Esophagus muscularis mucosa (tissue), 4 donors: ENCODE measurements at regions of chr2 and their contacts with region 1.

Region 1: DNA sequence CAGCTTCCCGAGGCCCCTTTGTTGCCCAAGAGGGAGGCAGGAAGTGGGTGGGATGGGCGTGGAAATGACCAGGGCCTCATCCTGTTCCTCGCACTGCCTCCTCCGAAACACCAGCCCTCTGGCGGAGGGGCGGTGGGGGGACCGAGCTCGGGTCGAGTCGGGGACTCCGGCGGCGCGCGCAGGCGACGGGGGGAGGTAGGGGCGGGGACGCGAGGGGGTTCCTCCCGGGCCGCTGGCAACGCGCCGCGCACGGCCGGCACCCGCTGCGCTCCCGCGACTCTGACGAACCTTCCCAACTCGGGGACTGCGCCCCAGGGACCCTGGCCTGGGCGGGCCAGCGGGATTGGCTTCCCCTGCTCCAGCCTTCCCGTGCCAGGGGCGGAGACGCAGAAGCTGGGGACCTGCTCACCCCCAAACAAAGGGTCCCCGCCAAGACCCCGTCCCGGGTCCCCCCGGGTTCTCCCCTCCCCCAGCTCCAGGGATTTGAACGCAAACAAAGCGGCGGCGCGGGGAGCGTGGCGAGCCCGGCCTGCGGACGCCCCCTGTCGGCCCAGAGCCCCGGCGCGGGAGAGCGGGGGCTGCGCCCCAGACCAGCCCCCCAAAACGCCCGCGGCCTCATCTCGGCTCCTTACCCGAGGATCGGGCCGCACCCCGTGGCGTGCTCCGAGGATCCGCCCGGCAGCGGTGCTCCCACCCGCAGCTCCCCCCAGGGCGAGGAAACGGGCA is 1.2 kb downstream of the SEMA4C start:
- DNase-seq: no peak
- H3K4me3 ChIP-seq: peak overlapping the region; percentile 89 to 99 (median 90)
- H3K27ac ChIP-seq: peak overlapping the region; percentile 98 to 100 (median 99)
- H3K4me1 ChIP-seq: peaks cover 44 to 81% (median 75%) of the 10 kb centered on the region in 4 donors
- H3K27me3 ChIP-seq: no peaks in the 10 kb centered on the region
- CTCF ChIP-seq: peak; percentile 43 to 64 (median 56)
- EP300 ChIP-seq: no peak
- POLR2A ChIP-seq: peak; percentile 33

Region 2: GRCh38 chr2:96320728-96321622 is 547.7 kb before region 1 on chr2:
- intact Hi-C with region 1: no loop called
- DNase-seq: no peak
- H3K4me3 ChIP-seq: peak overlapping the region; percentile 56 to 65 (median 60)
- H3K27ac ChIP-seq: peak overlapping the region; percentile 10 to 65 (median 54)
- H3K4me1 ChIP-seq: peaks cover 22 to 33% (median 31%) of the 10 kb centered on the region in 4 donors
- H3K27me3 ChIP-seq: peaks cover 3 to 91% (median 22%) of the 10 kb centered on the region in 4 donors
- CTCF ChIP-seq: no peak
- EP300 ChIP-seq: no peak
- POLR2A ChIP-seq: no peak

Region 3: GRCh38 chr2:96907115-96908041 is 38.7 kb after region 1 on chr2:
- intact Hi-C with region 1: loop called (anchors 1 kb)
- DNase-seq: peak; percentile 95
- H3K4me3 ChIP-seq: peak overlapping the region; percentile 28 to 48 (median 46)
- H3K27ac ChIP-seq: peak overlapping the region; percentile 92 to 98 (median 93)
- H3K4me1 ChIP-seq: peaks cover 47 to 62% (median 57%) of the 10 kb centered on the region in 4 donors
- H3K27me3 ChIP-seq: no peaks in the 10 kb centered on the region
- CTCF ChIP-seq: peak in 1 of 3 experiments; percentile 31
- EP300 ChIP-seq: no peak
- POLR2A ChIP-seq: no peak